BJ (cell line): ENCODE measurements at regions of chr12 and their contacts with region 1.

Region 1: DNA sequence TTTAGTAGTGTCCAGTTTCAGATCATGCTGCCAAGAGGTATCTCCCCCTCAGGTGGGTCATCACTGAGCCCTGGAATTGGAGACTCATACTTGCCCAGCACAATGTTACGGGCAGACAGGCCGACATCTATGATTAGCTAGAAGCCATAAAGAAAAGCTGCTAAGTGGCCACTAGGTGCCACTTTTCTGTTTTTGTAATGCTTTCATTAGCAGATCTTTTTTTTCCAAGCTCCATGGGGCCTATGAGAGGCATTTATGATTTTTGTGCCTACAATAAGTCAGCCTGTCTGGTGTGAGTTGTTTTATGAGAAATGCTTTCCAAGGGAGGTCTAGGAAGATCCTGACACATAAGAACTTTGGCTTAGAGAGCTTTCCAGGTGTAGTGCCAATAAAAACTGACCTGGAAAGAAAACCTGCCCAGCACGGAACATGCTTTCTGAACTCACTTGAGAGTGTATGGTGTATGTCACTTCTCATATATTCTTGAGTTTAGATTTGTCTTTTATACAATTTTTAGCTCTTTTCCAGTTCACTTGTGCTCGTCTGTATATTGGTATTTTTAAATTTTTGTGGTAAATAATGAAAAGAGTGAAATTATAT is 21.8 kb upstream of the SMCO2 start:
- DNase-seq: no peak
- H3K4me3 ChIP-seq: no peak overlapping the region
- H3K27me3 ChIP-seq: no peaks in the 10 kb centered on the region
- CTCF ChIP-seq: peak; percentile 61

Region 2: GRCh38 chr12:27434673-27435565 is 10.2 kb after region 1 on chr12:
- CTCF ChIA-PET with region 1: interaction called, 12 read pairs
- POLR2A ChIA-PET with region 1: interaction called, 4 read pairs
- DNase-seq: no peak
- H3K4me3 ChIP-seq: no peak overlapping the region
- H3K27me3 ChIP-seq: no peaks in the 10 kb centered on the region
- CTCF ChIP-seq: peak; percentile 60

Region 3: DNA sequence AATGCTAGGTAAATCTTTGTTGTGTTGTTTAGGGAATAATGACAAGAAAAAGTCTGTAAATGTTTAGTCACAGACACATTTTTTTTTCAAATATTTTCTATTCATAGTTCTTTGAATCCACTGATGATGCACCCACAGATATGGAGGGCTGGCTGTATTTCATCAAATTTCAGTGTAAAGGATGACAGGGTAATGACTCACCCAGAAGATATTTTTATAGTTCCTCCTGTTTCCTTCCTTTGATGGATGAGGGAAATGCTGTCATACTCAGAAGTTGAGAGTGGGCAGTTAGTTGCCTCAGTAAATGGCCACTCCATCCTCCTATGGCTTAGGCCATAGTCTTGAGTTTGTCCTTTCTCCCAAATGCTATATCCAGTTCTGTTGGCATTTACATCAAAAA is 194.6 kb after region 1 on chr12:
- CTCF ChIA-PET with region 1: no interaction called
- POLR2A ChIA-PET with region 1: no interaction called
- DNase-seq: peak; percentile 51
- H3K4me3 ChIP-seq: no peak overlapping the region
- H3K27me3 ChIP-seq: no peaks in the 10 kb centered on the region
- CTCF ChIP-seq: no peak